WTC11 (cell line): ENCODE measurements at regions of chr6 and their contacts with region 1.

Region 1: DNA sequence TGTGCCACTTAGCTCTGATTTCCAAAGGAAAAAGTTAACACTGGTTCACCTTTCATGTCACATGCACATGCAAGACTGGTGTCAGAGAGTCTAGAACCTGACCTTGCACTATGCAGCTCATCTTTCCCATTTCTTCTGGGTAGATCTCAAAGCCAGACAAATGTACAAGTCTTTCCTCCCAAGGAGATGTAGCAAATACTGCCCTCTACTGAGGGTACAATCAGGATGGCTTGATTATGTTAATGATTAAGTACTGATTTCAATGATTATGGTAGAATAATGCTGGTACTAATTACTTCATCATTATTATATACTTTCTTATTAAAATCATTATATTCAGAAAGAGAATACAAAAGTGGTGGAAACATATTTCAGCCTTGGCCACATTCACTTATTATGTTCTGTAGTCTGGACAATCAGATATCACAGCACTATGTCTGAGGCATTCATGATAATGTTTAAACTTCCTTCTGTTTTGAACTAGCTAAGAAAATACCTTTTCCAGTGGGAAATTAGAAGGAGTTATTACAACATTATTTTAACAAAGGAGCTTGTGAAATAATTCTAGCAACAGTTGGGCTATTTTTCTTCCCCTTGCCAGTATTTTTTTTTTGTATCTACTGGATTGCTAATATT is 68.5 kb upstream of the FOXO3 start:
- DNase-seq: no peak
- ATAC-seq: no peak; the same call in 1 of the 2 replicates
- H3K4me3 Mint-ChIP-seq: no peak overlapping the region
- H3K27ac Mint-ChIP-seq: no peak overlapping the region
- H3K4me1 Mint-ChIP-seq: no peaks in the 10 kb centered on the region
- H3K27me3 Mint-ChIP-seq: no peaks in the 10 kb centered on the region
- CTCF ChIP-seq: no peak

Region 2: GRCh38 chr6:108250240-108250866 is 241.9 kb before region 1 on chr6:
- CTCF ChIA-PET with region 1: interaction called, 32 read pairs
- POLR2A ChIA-PET with region 1: no interaction called
- DNase-seq: peak; percentile 25
- ATAC-seq: peak; percentile 88
- H3K4me3 Mint-ChIP-seq: no peak overlapping the region
- H3K27ac Mint-ChIP-seq: no peak overlapping the region
- H3K4me1 Mint-ChIP-seq: no peaks in the 10 kb centered on the region
- H3K27me3 Mint-ChIP-seq: no peaks in the 10 kb centered on the region
- CTCF ChIP-seq: no peak

Region 3: GRCh38 chr6:108368431-108369030 is 123.7 kb before region 1 on chr6:
- CTCF ChIA-PET with region 1: interaction called, 12 read pairs
- POLR2A ChIA-PET with region 1: no interaction called
- DNase-seq: no peak
- ATAC-seq: no peak
- H3K4me3 Mint-ChIP-seq: no peak overlapping the region
- H3K27ac Mint-ChIP-seq: no peak overlapping the region
- H3K4me1 Mint-ChIP-seq: peaks cover 6% of the 10 kb centered on the region
- H3K27me3 Mint-ChIP-seq: no peaks in the 10 kb centered on the region
- CTCF ChIP-seq: no peak

Region 4: GRCh38 chr6:108502832-108503231 is 10.6 kb after region 1 on chr6:
- CTCF ChIA-PET with region 1: no interaction called
- POLR2A ChIA-PET with region 1: no interaction called
- DNase-seq: no peak
- ATAC-seq: no peak
- H3K4me3 Mint-ChIP-seq: no peak overlapping the region
- H3K27ac Mint-ChIP-seq: no peak overlapping the region
- H3K4me1 Mint-ChIP-seq: peaks cover 15% of the 10 kb centered on the region
- H3K27me3 Mint-ChIP-seq: no peaks in the 10 kb centered on the region
- CTCF ChIP-seq: no peak